PC-9 (cell line): ENCODE measurements at regions of chr7 and their contacts with region 1.

Region 1: GRCh38 chr7:20053334-20054104 is 163.7 kb downstream of the MACC1 start:
- DNase-seq: no peak
- H3K4me3 ChIP-seq: no peak overlapping the region
- H3K27ac ChIP-seq: no peak overlapping the region
- H3K4me1 ChIP-seq: no peaks in the 10 kb centered on the region
- H3K27me3 ChIP-seq: no peaks in the 10 kb centered on the region
- CTCF ChIP-seq: no peak

Region 2: GRCh38 chr7:20013536-20013935 is 40.0 kb before region 1 on chr7:
- CTCF ChIA-PET with region 1: no interaction called
- POLR2A ChIA-PET with region 1: no interaction called
- intact Hi-C with region 1: no loop called
- DNase-seq: peak in 1 of 2 experiments; percentile 5
- H3K4me3 ChIP-seq: no peak overlapping the region
- H3K27ac ChIP-seq: no peak overlapping the region
- H3K4me1 ChIP-seq: no peaks in the 10 kb centered on the region
- H3K27me3 ChIP-seq: no peaks in the 10 kb centered on the region
- CTCF ChIP-seq: no peak

Region 3: DNA sequence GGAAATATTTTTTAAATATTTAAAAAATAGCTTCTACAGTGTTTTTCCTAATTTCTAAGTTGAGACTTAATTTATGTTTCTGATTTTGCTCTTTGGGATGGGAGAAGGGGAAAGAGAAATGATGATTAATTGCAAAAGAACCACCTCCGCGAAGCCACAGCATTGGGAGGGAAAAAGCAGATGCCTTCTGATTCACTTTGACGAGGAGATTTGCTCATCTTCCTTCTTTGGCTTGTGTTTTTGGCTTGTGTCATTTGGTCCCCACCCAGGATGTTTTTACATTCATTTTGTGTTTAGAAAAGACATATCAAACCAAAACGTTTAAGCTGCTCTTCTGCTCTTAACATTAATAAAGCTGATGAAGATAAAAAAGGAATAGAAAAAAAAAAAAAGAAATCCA is 41.9 kb after region 1 on chr7:
- CTCF ChIA-PET with region 1: no interaction called
- POLR2A ChIA-PET with region 1: no interaction called
- intact Hi-C with region 1: loop called (anchors 1 kb)
- DNase-seq: no peak
- H3K4me3 ChIP-seq: no peak overlapping the region
- H3K27ac ChIP-seq: no peak overlapping the region
- H3K4me1 ChIP-seq: no peaks in the 10 kb centered on the region
- H3K27me3 ChIP-seq: no peaks in the 10 kb centered on the region
- CTCF ChIP-seq: no peak

Region 4: DNA sequence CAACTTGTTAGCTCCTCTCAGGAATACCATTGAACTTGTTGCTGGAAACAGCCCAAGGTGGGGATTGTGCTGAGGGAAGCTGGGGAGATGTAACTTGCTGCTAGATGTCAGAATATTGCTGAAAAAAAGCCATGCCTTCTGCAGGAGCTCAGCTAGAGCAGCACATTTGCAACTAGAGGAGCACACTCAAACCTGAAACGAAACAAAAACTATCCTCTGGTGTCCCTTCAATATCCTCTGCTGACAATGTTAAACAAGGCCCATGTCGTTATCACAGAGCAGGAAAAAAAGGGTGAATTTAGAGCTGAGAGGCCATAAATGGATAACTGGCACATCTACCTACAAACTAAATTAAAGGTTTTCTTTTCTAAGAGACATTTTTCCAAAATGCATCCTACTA is 217.3 kb after region 1 on chr7:
- CTCF ChIA-PET with region 1: no interaction called
- POLR2A ChIA-PET with region 1: no interaction called
- intact Hi-C with region 1: no loop called
- DNase-seq: no peak
- H3K4me3 ChIP-seq: no peak overlapping the region
- H3K27ac ChIP-seq: no peak overlapping the region
- H3K4me1 ChIP-seq: peaks cover 5% of the 10 kb centered on the region; the same call in 1 of the 2 replicates
- H3K27me3 ChIP-seq: no peaks in the 10 kb centered on the region
- CTCF ChIP-seq: no peak